ENCODE measurements at regions of chr18 and their contacts with region 1.

Region 1: DNA sequence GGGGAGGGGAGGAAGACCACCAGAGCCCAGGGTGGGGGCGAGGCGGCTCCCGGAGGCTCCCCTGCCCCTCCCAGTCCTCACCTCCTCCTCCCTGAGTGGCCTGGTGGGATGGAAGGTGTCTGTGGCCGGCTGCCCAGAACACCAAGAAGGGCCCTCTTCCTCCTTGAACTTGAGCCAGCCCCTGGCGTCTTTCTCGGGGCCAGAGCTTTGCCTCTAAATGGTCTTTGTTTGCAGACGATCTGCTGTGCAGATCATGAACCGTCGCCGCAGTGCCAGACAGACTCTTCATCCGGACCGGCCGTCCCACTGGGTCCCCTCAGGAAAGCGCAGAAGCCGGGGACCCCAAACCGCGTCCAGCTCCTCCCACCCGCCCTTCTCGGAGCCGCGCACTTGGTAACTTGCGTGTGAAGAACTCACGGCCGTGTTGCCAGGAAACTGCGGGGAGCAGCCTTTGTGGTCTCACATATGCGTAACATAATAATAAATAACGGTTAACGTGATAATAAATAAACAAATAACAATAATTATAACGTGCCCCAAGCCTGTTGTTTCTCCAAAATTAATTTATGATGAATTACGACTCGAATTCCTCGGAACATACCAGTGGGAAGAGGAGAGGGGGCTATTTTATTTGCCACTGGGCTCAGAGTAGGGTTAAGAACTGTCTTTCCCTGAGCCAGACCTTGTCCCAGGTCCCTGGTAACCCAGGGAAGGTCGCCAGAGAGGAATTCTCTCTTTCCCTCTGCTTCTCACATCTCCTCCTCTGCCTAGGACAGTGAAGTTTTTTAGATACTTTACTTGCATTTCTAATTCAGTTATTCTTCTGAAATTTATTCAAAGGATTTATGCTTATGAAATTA is 41.0 kb downstream of the PTGR3 start:
- DNase-seq: peak; percentile 37 to 78 (median 44)
- ATAC-seq: peak in 3 of 4 donors; percentile 41 to 58 (median 44)
- H3K4me3 ChIP-seq: peak overlapping the region in 10 of 12 donors; percentile 7 to 40 (median 32)
- H3K27ac ChIP-seq: peak overlapping the region in 11 of 12 donors; percentile 19 to 92 (median 61)
- H3K4me1 ChIP-seq: peaks cover 0 to 23% (median 7%) of the 10 kb centered on the region in 12 donors
- H3K27me3 ChIP-seq: no peaks in the 10 kb centered on the region
- CTCF ChIP-seq: no peak
- POLR2A ChIP-seq: no peak

Region 2: DNA sequence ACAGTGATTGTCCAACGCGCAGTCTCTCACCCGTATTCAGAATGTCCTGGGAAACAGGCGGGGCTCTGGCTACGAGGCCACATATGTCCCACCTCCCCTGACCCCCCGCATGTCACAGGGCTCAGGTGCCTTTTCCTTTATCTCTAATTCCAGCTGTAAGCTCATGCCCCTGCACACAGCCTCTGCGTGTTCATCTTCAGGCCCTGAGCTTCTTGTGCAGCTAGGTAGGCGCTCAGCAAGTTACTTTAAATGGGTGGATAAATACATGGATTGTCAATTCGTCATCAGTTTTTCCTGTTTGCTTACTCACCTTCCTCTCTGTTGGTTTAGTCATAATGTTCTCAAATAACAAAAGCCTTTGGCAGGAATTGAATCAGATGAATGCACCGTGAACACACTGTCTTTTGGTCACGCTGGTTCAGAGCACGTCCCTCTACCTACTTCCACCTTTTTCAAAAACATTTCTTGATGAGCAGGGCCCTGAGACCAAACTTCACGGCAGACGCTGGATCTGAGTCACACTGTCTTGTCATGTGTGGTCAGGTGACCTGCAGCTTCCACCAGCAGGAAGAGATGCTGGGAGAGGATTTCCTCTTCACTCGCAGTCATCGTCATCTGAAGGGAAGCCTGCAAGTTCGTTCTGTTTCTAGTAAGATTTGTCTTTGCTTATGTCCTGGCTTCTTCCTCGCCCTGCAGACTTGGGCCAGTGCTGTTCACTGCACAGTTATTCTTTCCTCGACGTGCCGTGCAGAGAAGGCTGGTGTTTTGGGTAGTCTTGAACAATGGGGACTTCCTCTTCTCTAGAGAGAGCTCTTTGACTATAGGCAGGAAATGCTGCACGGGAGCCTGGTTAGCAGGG is 97.1 kb before region 1 on chr18:
- intact Hi-C with region 1: loop called in 2 of 10 experiments (anchors 2 to 10 kb)
- DNase-seq: peak in 2 of 5 donors; percentile 44 to 53
- ATAC-seq: peak; percentile 50 to 83 (median 54)
- H3K4me3 ChIP-seq: peak overlapping the region in 10 of 12 donors; percentile 8 to 46 (median 36)
- H3K27ac ChIP-seq: peak overlapping the region; percentile 48 to 89 (median 76)
- H3K4me1 ChIP-seq: peaks cover 0 to 28% (median 2%) of the 10 kb centered on the region in 12 donors
- H3K27me3 ChIP-seq: no peaks in the 10 kb centered on the region
- CTCF ChIP-seq: no peak
- POLR2A ChIP-seq: peak in 1 of 2 donors; percentile 54